Mammary epithelial cell (primary cell): ENCODE measurements at regions of chr5 and their contacts with region 1.

Region 1: GRCh38 chr5:109409844-109410388 is at the start of gene PJA2:
- DNase-seq: peak; percentile 99
- H3K4me3 ChIP-seq: peak within 1 kb of the TSS; percentile 60 to 95 (median 95)
- H3K27ac ChIP-seq: peak within 1 kb of the TSS; percentile 97
- H3K4me1 ChIP-seq: peaks cover 21% of the 10 kb centered on the region
- H3K27me3 ChIP-seq: no peaks in the 10 kb centered on the region
- CTCF ChIP-seq: peak in 1 of 2 donors; percentile 36
- total RNA-seq, gene PJA2: 40.3 to 64.5 TPM

Region 2: GRCh38 chr5:108727651-108728565 is 682.0 kb before region 1 on chr5:
- CTCF ChIA-PET with region 1: no interaction called
- dilution Hi-C with region 1: no loop called
- in situ Hi-C with region 1: no loop called
- intact Hi-C with region 1: loop called (anchors 5 kb)
- DNase-seq: peak; percentile 89
- H3K4me3 ChIP-seq: peak overlapping the region; percentile 64 to 88 (median 73)
- H3K27ac ChIP-seq: peak overlapping the region; percentile 82
- H3K4me1 ChIP-seq: peaks cover 31% of the 10 kb centered on the region
- H3K27me3 ChIP-seq: no peaks in the 10 kb centered on the region
- CTCF ChIP-seq: no peak

Region 3: GRCh38 chr5:108919591-108920326 is 490.2 kb before region 1 on chr5:
- CTCF ChIA-PET with region 1: no interaction called
- dilution Hi-C with region 1: no loop called
- in situ Hi-C with region 1: no loop called
- intact Hi-C with region 1: loop called (anchors 10 kb)
- DNase-seq: no peak
- H3K4me3 ChIP-seq: no peak overlapping the region
- H3K27ac ChIP-seq: no peak overlapping the region
- H3K4me1 ChIP-seq: peaks cover 12% of the 10 kb centered on the region
- H3K27me3 ChIP-seq: no peaks in the 10 kb centered on the region
- CTCF ChIP-seq: peak in 1 of 2 donors; percentile 37

Region 4: GRCh38 chr5:109378095-109378494 is 31.8 kb before region 1 on chr5:
- CTCF ChIA-PET with region 1: no interaction called
- dilution Hi-C with region 1: no loop called
- in situ Hi-C with region 1: no loop called
- intact Hi-C with region 1: loop called (anchors 2 kb)
- DNase-seq: no peak
- H3K4me3 ChIP-seq: no peak overlapping the region
- H3K27ac ChIP-seq: no peak overlapping the region
- H3K4me1 ChIP-seq: no peaks in the 10 kb centered on the region
- H3K27me3 ChIP-seq: no peaks in the 10 kb centered on the region
- CTCF ChIP-seq: no peak

Region 5: GRCh38 chr5:109468737-109469420 is 59.0 kb after region 1 on chr5:
- CTCF ChIA-PET with region 1: no interaction called
- dilution Hi-C with region 1: no loop called
- in situ Hi-C with region 1: no loop called
- intact Hi-C with region 1: loop called (anchors 5 kb)
- DNase-seq: peak; percentile 73
- H3K4me3 ChIP-seq: no peak overlapping the region
- H3K27ac ChIP-seq: no peak overlapping the region
- H3K4me1 ChIP-seq: peaks cover 6% of the 10 kb centered on the region
- H3K27me3 ChIP-seq: no peaks in the 10 kb centered on the region
- CTCF ChIP-seq: peak; percentile 74 to 85